ENCODE measurements at regions of chr16 and their contacts with region 1.

Region 1: GRCh38 chr16:56643080-56643778 is 4.8 kb downstream of the MT1A start:
- DNase-seq: peak; percentile 94
- H3K4me3 Mint-ChIP-seq: peak overlapping the region; percentile 81
- H3K27ac Mint-ChIP-seq: peak overlapping the region; percentile 53
- H3K4me1 Mint-ChIP-seq: peaks cover 22% of the 10 kb centered on the region
- H3K27me3 Mint-ChIP-seq: peaks cover 61% of the 10 kb centered on the region

Region 2: DNA sequence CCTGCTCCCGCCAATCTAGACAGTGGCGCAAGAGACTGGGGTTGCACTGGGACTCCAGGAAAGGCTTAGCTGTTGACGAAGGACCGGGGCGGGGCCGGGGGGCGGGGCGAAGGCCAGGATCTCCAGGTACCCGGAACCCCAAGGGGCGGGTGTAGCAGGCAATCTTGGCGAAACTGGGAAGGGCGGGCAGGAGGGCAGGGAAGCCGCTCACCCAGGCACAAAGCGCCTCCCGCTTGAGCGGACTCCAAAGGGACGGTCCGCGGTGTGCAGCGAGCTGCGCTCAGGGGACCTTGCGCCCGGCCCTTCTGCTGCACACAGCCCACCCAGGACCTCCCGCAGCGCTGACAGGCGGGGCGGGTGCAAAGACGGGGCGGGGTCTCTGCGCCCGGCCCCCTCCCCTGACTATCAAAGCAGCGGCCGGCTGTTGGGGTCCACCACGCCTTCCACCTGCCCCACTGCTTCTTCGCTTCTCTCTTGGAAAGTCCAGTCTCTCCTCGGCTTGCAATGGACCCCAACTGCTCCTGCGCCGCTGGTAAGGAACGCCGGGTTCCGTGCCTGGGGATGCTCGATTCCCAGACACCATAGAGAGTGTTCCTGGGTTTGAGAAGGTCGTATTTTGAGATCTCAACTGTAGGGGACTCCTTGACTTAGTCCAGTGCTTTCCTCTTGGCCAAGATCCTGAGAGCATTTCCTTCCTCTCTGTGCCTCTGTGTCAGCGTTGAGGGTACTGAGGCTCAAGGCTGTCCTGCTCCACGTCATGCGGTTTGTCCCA is 14.5 kb after region 1 on chr16 and contains the start of gene MT1F:
- intact Hi-C with region 1: loop called (anchors 2 kb)
- DNase-seq: peak; percentile 87
- H3K4me3 Mint-ChIP-seq: peak within 1 kb of the TSS; percentile 92
- H3K27ac Mint-ChIP-seq: peak within 1 kb of the TSS; percentile 85
- H3K4me1 Mint-ChIP-seq: peaks cover 18% of the 10 kb centered on the region
- H3K27me3 Mint-ChIP-seq: peaks cover 14% of the 10 kb centered on the region
- total RNA-seq, gene MT1F: 4.2 and 6.7 TPM in 2 replicates

Measured in activated CD4-positive, alpha-beta T cell treated with anti-CD3 and anti-CD28 coated beads, Interleukin-2, amount 10 ng/mL, durations not matched to agents 24 days and 14 days (primary cell).